ENCODE measurements at regions of chr11 and their contacts with region 1.

Region 1: DNA sequence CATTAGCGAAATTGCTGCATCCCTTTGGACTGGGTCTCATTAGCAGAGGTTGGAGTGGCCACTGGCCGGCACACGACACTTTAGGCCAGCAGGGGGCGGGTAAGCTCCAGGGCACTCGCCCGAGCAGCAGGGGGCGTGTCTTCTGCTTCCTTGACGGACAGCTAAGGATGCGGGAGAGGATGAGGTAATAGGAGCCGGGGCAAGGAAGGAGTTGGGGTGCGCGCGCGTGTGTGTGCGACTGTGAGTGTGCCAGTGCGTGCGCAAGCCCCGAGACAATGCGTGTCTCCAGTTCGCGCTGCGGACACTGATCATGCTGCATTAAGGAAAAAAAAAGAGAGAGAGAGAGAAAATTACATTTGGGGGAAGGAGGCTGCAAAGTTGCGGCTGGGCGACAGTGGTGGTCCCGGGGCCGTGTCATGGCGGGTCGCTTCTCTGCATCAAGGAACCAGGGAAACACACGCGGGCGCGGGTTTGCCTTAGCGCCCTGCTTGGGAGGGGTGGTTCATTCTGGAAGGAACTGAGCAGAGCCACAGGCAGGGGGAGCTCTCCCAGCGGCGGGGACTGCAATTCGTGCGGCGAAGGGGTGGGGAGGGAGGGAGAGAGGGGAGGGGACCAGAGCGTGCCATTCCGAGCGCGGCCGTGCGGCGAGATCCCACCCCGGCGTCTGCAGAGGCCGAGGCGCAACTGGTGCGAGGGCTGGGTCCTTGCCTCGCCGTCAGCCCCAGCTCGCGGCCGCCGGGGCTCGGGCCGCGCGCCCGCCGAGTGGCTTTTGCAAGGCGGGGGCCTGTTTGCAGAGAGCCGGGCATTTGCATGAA is at the start of gene DTX4:
- DNase-seq: peak; percentile 88 to 89
- H3K4me3 ChIP-seq: peak within 1 kb of the TSS; percentile 58 to 96 (median 72)
- H3K27ac ChIP-seq: peak within 1 kb of the TSS; percentile 69 to 91
- H3K4me1 ChIP-seq: peaks cover 0 to 6% of the 10 kb centered on the region in 2 donors
- H3K27me3 ChIP-seq: no peaks in the 10 kb centered on the region
- CTCF ChIP-seq: peak; percentile 65 to 93 (median 93)
- POLR2A ChIP-seq: no peak
- total RNA-seq, gene DTX4: 7.5 to 22.9 (median 10.8) TPM

Region 2: GRCh38 chr11:57800444-57801182 is 1371.1 kb before region 1 on chr11:
- intact Hi-C with region 1: loop called (anchors 10 kb)
- DNase-seq: peak in 1 of 2 donors; percentile 50
- H3K4me3 ChIP-seq: peak overlapping the region in 1 of 3 donors; percentile 24
- H3K27ac ChIP-seq: peak overlapping the region; percentile 69 to 83
- H3K4me1 ChIP-seq: peaks cover 7 to 17% of the 10 kb centered on the region in 2 donors
- H3K27me3 ChIP-seq: no peaks in the 10 kb centered on the region
- CTCF ChIP-seq: peak; percentile 93 to 98 (median 97)
- POLR2A ChIP-seq: no peak

Region 3: DNA sequence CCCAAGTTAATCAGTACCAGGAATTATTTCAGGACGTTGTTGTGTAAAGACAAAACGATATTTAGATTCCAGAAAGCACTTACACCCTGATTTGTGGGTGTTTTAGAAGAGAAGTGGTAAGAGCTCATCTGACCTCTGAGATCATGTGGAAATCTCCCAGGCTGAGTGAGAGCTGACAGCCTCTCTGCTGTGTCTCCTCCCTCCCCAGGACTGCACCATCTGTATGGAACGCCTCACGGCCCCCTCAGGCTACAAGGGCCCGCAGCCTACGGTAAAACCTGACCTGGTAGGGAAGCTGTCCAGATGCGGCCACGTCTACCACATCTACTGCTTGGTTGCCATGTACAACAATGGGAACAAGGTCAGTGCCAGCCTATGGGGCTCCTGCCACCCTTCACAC is 20.2 kb after region 1 on chr11:
- intact Hi-C with region 1: loop called (anchors 1 kb)
- DNase-seq: no peak
- H3K4me3 ChIP-seq: no peak overlapping the region
- H3K27ac ChIP-seq: peak overlapping the region in 1 of 2 donors; percentile 27
- H3K4me1 ChIP-seq: peaks cover 0 to 3% of the 10 kb centered on the region in 2 donors
- H3K27me3 ChIP-seq: no peaks in the 10 kb centered on the region
- CTCF ChIP-seq: no peak
- POLR2A ChIP-seq: no peak

Region 4: DNA sequence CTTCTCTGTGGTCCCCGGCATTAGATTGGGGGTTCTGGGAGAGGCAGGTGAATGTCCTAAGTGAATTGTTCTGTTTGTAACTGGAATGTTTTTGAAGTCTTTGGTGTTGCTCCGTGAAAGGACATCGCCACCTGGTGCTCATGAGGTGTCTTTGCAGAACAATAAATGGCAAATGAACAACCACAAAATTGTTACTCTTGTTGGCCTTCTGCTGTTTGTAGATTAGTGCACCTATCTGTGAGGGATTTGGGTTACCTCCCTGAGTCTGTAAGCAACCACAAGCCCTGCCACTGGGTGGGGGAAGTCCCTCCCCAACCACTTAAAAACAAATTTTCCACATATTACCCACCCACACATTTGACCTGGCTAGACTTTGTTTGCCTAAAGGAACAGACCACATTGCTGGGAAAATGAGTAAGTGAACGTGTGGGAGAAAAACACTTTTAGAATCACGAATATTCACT is 36.3 kb after region 1 on chr11:
- intact Hi-C with region 1: loop called (anchors 5 kb)
- DNase-seq: peak in 1 of 2 donors; percentile 38
- H3K4me3 ChIP-seq: peak overlapping the region in 1 of 3 donors; percentile 18
- H3K27ac ChIP-seq: peak overlapping the region; percentile 27 to 48
- H3K4me1 ChIP-seq: peaks cover 0 to 4% of the 10 kb centered on the region in 2 donors
- H3K27me3 ChIP-seq: no peaks in the 10 kb centered on the region
- CTCF ChIP-seq: peak; percentile 58 to 65 (median 62)
- POLR2A ChIP-seq: no peak

Region 5: GRCh38 chr11:59273373-59273841 is 101.7 kb after region 1 on chr11:
- intact Hi-C with region 1: no loop called
- DNase-seq: no peak
- H3K4me3 ChIP-seq: no peak overlapping the region
- H3K27ac ChIP-seq: peak overlapping the region; percentile 76 to 82
- H3K4me1 ChIP-seq: no peaks in the 10 kb centered on the region
- H3K27me3 ChIP-seq: no peaks in the 10 kb centered on the region
- CTCF ChIP-seq: no peak
- POLR2A ChIP-seq: no peak

Measured in breast epithelium (tissue), 4 donors.